ENCODE measurements at regions of chr10 and their contacts with region 1.

Region 1: GRCh38 chr10:126041781-126042231 is 145.4 kb downstream of the FANK1 start:
- DNase-seq: peak; percentile 82
- ATAC-seq: peak; percentile 89
- H3K4me3 Mint-ChIP-seq: peak overlapping the region; percentile 78
- H3K27ac Mint-ChIP-seq: peak overlapping the region; percentile 100
- H3K4me1 Mint-ChIP-seq: peaks cover 69% of the 10 kb centered on the region
- H3K27me3 Mint-ChIP-seq: no peaks in the 10 kb centered on the region
- CTCF ChIP-seq: no peak

Region 2: GRCh38 chr10:125822878-125823662 is 218.7 kb before region 1 on chr10 and contains the starts of genes BCCIP and UROS:
- CTCF ChIA-PET with region 1: no interaction called
- POLR2A ChIA-PET with region 1: interaction called, 4 read pairs
- intact Hi-C with region 1: loop called (anchors 5 kb)
- DNase-seq: peak; percentile 86
- ATAC-seq: peak; percentile 87
- H3K4me3 Mint-ChIP-seq: peak within 1 kb of the TSS; percentile 78
- H3K27ac Mint-ChIP-seq: peak within 1 kb of the TSS; percentile 46
- H3K4me1 Mint-ChIP-seq: peaks cover 36% of the 10 kb centered on the region
- H3K27me3 Mint-ChIP-seq: no peaks in the 10 kb centered on the region
- CTCF ChIP-seq: no peak
- total RNA-seq, gene BCCIP: 63.6 and 64.9 TPM in 2 replicates
- total RNA-seq, gene UROS: 34.1 and 34.9 TPM in 2 replicates

Region 3: GRCh38 chr10:126027692-126028091 is 14.1 kb before region 1 on chr10:
- CTCF ChIA-PET with region 1: no interaction called
- POLR2A ChIA-PET with region 1: interaction called, 4 read pairs
- intact Hi-C with region 1: loop called (anchors 2 kb)
- DNase-seq: no peak
- ATAC-seq: no peak
- H3K4me3 Mint-ChIP-seq: no peak overlapping the region
- H3K27ac Mint-ChIP-seq: no peak overlapping the region
- H3K4me1 Mint-ChIP-seq: peaks cover 5% of the 10 kb centered on the region
- H3K27me3 Mint-ChIP-seq: no peaks in the 10 kb centered on the region
- CTCF ChIP-seq: no peak

Region 4: GRCh38 chr10:126081867-126082472 is 40.2 kb after region 1 on chr10:
- CTCF ChIA-PET with region 1: no interaction called
- POLR2A ChIA-PET with region 1: interaction called, 10 read pairs
- intact Hi-C with region 1: no loop called
- DNase-seq: no peak
- ATAC-seq: no peak
- H3K4me3 Mint-ChIP-seq: no peak overlapping the region
- H3K27ac Mint-ChIP-seq: no peak overlapping the region
- H3K4me1 Mint-ChIP-seq: no peaks in the 10 kb centered on the region
- H3K27me3 Mint-ChIP-seq: peaks cover 7% of the 10 kb centered on the region
- CTCF ChIP-seq: no peak

Region 5: DNA sequence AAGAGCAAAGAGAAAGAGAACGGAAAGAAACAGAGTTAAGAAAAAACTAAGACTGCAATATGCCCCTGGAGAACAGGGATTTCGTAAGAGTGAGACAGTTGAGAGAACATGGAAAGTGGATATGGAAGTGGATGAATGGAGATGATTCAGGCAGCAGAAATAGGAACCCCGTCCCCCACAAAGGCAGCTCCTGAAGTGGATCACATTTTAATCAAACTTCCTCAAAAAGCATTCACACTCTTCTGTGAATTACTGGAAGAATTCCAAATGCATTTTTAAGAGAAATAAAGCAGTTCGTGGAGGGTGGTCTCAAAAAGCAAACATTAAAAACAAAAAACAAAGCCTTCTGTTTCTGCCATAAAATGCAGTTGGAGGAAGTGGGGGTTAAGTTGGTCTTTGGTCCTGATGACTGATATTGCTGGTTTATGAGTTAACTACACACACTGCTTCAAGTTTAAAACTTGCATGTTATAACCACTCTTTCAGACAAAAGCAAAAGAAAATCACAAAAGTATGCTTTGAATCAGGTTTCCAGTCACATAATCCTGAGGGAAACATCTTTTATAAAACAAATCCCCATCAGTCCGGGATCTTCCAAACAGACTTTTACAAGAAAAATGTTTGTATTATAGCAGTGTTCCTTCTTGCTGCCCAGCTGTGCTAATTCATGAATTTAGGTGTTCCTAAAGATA is 68.8 kb after region 1 on chr10:
- CTCF ChIA-PET with region 1: no interaction called
- POLR2A ChIA-PET with region 1: no interaction called
- intact Hi-C with region 1: no loop called
- DNase-seq: no peak
- ATAC-seq: no peak
- H3K4me3 Mint-ChIP-seq: no peak overlapping the region
- H3K27ac Mint-ChIP-seq: no peak overlapping the region
- H3K4me1 Mint-ChIP-seq: peaks cover 2% of the 10 kb centered on the region
- H3K27me3 Mint-ChIP-seq: peaks cover 8% of the 10 kb centered on the region
- CTCF ChIP-seq: no peak

Region 6: GRCh38 chr10:126179637-126180036 is 137.8 kb after region 1 on chr10:
- CTCF ChIA-PET with region 1: no interaction called
- POLR2A ChIA-PET with region 1: no interaction called
- intact Hi-C with region 1: loop called (anchors 1 kb)
- DNase-seq: no peak
- ATAC-seq: peak; percentile 86
- H3K4me3 Mint-ChIP-seq: peak overlapping the region; percentile 41
- H3K27ac Mint-ChIP-seq: peak overlapping the region; percentile 50
- H3K4me1 Mint-ChIP-seq: peaks cover 18% of the 10 kb centered on the region
- H3K27me3 Mint-ChIP-seq: peaks cover 2% of the 10 kb centered on the region
- CTCF ChIP-seq: no peak

Measured in activated B cell treated with CpG ODN at 0.5 μM for 24 hours (primary cell).